PC-3 (cell line): ENCODE measurements at regions of chr10 and their contacts with region 1.

Region 1: GRCh38 chr10:91163269-91163868 is 57.1 kb upstream of the PCGF5 start:
- DNase-seq: peak; percentile 43
- ATAC-seq: peak; percentile 30
- H3K4me3 ChIP-seq: peak overlapping the region; percentile 82
- H3K27ac ChIP-seq: peak overlapping the region; percentile 40
- H3K4me1 ChIP-seq: peaks cover 10% of the 10 kb centered on the region; the same call in 1 of the 2 replicates
- H3K27me3 ChIP-seq: no peaks in the 10 kb centered on the region
- CTCF ChIP-seq: no peak

Region 2: GRCh38 chr10:90804354-90804753 is 359.0 kb before region 1 on chr10:
- CTCF ChIA-PET with region 1: no interaction called
- POLR2A ChIA-PET with region 1: interaction called, 14 read pairs
- intact Hi-C with region 1: no loop called
- DNase-seq: no peak
- ATAC-seq: no peak
- H3K4me3 ChIP-seq: no peak overlapping the region
- H3K27ac ChIP-seq: no peak overlapping the region
- H3K4me1 ChIP-seq: no peaks in the 10 kb centered on the region
- H3K27me3 ChIP-seq: no peaks in the 10 kb centered on the region
- CTCF ChIP-seq: no peak

Region 3: GRCh38 chr10:91220194-91220953 is 57.0 kb after region 1 on chr10 and contains the start of gene PCGF5:
- CTCF ChIA-PET with region 1: no interaction called
- POLR2A ChIA-PET with region 1: no interaction called
- intact Hi-C with region 1: loop called (anchors 5 kb)
- DNase-seq: peak; percentile 80
- ATAC-seq: peak; percentile 98
- H3K4me3 ChIP-seq: peak within 1 kb of the TSS; percentile 88
- H3K27ac ChIP-seq: no peak within 1 kb of the TSS
- H3K4me1 ChIP-seq: peaks cover 7% of the 10 kb centered on the region; the same call in 1 of the 2 replicates
- H3K27me3 ChIP-seq: no peaks in the 10 kb centered on the region
- CTCF ChIP-seq: no peak
- total RNA-seq, gene PCGF5: 15.8 and 25.0 TPM in 2 replicates